ENCODE measurements at regions of chr16 and their contacts with region 1.

Region 1: DNA sequence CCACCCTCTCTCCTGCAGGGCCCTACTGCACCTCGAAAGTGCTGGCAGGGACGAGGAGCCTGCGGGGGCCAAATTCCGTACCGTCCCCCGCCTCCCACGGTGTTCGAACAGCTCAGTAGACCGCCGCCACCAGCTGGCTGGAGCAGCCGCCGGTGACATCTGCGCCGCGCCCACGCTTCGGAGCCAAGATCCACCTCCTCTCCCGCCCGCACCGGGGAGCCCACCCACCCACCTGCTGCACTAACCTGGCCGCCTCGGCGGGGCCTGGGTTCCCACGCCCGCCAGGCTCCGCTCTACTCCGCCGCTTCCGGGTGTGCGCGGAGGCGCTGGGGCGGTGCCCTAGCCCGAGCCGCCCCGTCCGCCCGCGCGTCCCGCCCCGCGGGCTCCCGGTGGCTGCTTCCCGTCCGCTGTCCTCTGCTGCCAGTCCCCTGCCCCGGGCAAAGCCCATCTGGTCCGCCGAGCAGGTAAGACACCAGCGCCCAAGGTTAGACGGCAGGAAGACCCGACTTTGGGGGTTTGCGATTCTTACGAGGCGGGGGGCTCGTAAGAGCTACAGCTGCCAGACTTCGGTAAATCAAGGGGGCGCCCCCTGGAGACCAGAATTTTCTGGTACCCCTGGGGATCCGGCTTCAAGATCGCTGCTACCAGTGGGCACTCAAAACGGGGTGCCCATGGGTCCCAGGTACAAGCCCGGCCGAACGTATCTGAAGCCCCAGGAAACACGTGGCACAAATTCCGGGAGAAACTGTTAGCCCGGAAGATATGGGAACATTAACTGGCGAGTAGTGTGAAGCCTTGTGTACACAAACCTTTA is at the starts of genes FBXL8 and TRADD:
- DNase-seq: peak; percentile 84
- H3K4me3 ChIP-seq: peak within 1 kb of the TSS; percentile 98
- H3K27ac ChIP-seq: peak within 1 kb of the TSS; percentile 96
- H3K4me1 ChIP-seq: peaks cover 37% of the 10 kb centered on the region
- H3K27me3 ChIP-seq: peaks cover 14% of the 10 kb centered on the region
- CTCF ChIP-seq: peak; percentile 29
- total RNA-seq, gene FBXL8: 12.0 to 27.1 TPM
- total RNA-seq, gene TRADD: 27.5 to 37.1 TPM

Region 2: DNA sequence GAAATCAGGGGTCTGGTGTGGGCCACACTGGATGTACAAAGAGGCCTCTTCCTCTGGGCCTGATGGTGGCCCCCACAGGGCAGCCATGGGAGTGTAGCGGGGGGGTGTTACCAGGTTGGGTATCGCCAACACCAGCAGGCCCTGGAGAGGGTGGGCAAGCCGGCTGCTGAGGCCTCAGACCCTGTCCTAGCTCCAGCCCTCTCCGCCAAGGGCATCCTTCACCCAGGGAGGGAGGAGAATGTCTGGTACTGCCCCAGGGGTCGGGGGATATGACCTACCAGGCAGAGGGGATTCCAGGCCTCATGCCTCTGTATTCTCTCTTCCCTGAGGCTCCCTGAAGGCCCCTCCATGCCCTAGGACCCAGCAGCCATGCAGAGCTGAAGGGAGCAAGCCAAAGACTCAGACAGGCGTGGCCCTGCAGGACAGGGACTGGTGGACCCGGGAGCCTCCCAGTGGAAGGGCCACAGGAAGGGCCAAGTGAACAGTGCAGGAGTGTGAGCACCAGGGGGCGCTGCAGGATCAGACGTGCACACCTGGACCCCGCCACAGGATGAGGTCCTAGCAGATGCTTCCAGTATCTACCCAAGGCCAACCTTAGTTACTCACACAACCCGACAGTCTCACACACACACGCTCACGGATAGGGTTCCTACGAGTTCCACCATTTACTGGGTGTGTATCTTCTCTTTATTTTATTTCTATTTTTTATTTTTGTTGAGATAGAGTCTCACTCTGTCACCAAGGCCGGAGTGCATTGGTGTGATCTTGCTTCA is 182.3 kb before region 1 on chr16:
- intact Hi-C with region 1: loop called (anchors 5 kb)
- DNase-seq: peak; percentile 93
- H3K4me3 ChIP-seq: no peak overlapping the region
- H3K27ac ChIP-seq: no peak overlapping the region
- H3K4me1 ChIP-seq: no peaks in the 10 kb centered on the region
- H3K27me3 ChIP-seq: no peaks in the 10 kb centered on the region
- CTCF ChIP-seq: peak; percentile 93

Region 3: DNA sequence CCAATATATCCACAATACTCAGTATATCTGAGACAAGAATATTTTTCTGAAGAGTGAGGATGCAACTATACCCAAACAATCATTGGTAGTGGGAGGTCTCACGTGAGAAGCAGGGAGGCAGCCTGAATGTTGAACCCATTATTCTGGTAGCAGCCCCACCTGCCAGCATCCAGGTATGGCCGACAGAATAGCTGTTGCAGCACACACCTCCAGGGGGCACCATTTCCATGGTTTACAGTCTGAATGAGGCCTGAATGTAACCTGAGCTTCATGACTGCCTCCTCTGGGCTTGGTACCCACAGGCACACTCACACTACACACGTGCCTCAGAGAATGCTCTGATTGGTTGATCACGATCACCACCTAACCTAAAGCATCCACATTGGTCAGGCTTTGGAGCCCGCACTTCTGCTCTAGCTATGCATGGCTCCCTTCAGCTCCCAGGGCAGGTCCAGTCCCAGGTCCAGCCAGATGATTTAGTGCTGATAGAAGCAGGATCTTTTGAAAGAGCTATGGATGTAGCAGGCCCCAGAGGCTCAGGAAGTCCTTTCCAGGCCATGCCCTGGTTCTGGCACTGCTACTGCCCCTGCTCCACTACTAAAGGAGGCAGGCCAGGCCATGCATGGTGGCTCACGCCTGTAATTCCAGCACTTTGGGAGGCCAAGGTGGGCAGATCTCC is 141.9 kb before region 1 on chr16:
- intact Hi-C with region 1: loop called (anchors 5 kb)
- DNase-seq: peak; percentile 91
- H3K4me3 ChIP-seq: no peak overlapping the region
- H3K27ac ChIP-seq: no peak overlapping the region
- H3K4me1 ChIP-seq: peaks cover 4% of the 10 kb centered on the region
- H3K27me3 ChIP-seq: peaks cover 11% of the 10 kb centered on the region
- CTCF ChIP-seq: peak; percentile 76